ENCODE measurements at regions of chr1 and their contacts with region 1.

Region 1: DNA sequence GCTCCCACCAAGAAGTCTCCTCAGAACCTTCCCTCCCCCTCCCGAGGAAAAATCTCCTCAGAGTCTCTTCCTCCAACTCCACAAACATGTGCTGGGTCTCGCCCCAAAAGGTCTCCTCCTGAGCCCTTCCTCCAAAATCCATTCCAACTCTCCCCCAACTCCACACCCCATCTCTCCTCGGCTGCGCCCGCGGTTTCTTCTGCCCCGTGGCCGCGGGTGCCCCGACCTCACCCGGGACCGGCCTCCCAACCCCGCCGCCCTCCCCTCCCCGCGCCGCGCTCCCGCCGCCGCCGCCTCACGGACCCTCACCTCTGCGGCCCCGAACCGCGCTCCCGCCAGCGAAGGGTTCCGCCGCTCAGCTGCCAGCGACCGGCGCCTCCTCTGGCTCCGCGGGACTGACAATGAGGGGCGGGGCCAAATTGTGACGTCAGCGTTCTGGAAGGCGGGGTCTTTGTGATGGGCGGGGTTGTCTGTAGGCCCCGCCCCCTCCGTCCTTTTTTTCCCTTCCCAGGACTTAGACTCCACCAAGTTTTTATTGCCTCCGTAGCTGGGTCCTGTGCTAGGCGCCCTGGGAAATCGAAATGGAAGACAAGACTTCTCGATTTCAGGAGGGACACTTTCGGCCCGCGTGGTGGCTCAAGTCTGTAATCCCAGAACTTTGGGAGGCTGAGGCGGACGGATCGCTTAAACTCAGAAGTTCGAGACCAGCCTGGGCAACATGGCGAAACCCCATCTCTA is at the start of gene LUZP1:
- DNase-seq: peak; percentile 90
- H3K4me3 Mint-ChIP-seq: peak within 1 kb of the TSS; percentile 96
- H3K27ac Mint-ChIP-seq: peak within 1 kb of the TSS; percentile 90
- H3K4me1 Mint-ChIP-seq: peaks cover 25% of the 10 kb centered on the region
- H3K27me3 Mint-ChIP-seq: peaks cover 5% of the 10 kb centered on the region
- total RNA-seq, gene LUZP1: 16.9 to 17.5 TPM

Region 2: DNA sequence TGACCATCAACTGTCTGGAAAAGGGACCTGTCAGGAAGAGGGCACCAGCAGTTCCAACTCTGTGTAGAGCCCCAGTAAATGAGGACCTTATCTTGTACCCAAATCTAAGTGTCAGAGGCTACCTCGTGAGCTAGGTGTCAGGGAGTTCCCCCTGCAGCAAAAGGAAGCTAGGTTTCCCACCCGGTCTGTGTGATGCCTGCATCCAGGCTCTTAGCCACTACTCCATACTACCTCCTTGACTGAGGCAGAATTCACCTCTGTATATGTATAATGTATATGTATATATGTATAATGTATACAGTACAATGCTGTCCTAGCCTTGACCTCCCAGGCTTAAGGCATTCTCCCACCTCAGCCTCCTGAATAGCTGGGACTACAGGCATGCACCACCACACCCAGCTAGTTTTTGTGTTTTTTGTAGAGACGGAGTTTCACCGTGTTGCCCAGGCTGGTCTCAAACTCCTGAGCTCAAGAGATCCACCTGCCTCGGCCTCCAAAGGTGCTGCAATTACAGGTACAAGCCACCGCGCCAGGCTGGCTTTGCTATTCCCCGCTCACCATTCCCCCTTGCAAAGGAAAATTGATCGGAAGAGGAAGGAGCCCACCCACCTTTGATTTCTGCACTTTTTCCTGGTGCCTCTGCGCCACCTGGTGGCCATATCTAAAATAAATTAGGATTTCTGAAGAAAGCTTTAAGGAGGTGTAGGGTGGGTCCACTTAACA is 15.7 kb after region 1 on chr1:
- CTCF ChIA-PET with region 1: interaction called, 31 read pairs
- POLR2A ChIA-PET with region 1: no interaction called
- DNase-seq: peak; percentile 45
- H3K4me3 Mint-ChIP-seq: no peak overlapping the region
- H3K27ac Mint-ChIP-seq: peak overlapping the region; percentile 10
- H3K4me1 Mint-ChIP-seq: peaks cover 10% of the 10 kb centered on the region
- H3K27me3 Mint-ChIP-seq: peaks cover 9% of the 10 kb centered on the region

Region 3: DNA sequence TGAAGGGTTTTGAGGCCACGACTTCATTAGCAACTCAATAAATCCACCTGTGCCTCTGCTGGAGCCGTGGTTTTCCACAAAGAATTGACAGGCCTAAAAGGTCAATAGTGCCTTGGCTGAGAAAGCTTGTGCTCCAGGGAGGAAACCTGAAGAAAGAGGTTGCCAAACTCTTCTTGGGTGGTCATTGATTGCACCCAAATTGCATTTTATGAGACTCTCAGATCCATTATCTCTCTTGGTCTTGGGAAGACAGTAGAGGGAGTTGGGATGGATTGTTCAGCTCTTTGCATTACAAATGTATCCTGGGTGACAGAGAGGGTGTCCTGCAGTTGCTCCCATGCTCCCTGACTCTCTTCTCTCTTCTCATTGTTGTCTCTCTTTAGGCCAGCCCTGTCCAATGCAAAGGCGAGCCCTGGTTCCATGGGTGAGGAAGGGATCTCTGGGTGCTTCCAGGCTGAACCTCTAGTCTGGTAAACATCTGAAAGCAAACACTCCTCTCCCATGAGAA is 94.8 kb after region 1 on chr1:
- CTCF ChIA-PET with region 1: no interaction called
- POLR2A ChIA-PET with region 1: no interaction called
- DNase-seq: no peak
- H3K4me3 Mint-ChIP-seq: no peak overlapping the region
- H3K27ac Mint-ChIP-seq: no peak overlapping the region
- H3K4me1 Mint-ChIP-seq: no peaks in the 10 kb centered on the region
- H3K27me3 Mint-ChIP-seq: no peaks in the 10 kb centered on the region

Measured in activated CD4-positive, alpha-beta T cell treated with anti-CD3 and anti-CD28 coated beads, Interleukin-2, amount 10 ng/mL, durations not matched to agents 7 days and 5 days (primary cell).